Activated CD8-positive, alpha-beta T cell treated with anti-CD3 and anti-CD28 coated beads, Interleukin-2, amount 10 ng/mL, durations not matched to agents 7 days and 5 days (primary cell): ENCODE measurements at regions of chr14 and their contacts with region 1.

Region 1: DNA sequence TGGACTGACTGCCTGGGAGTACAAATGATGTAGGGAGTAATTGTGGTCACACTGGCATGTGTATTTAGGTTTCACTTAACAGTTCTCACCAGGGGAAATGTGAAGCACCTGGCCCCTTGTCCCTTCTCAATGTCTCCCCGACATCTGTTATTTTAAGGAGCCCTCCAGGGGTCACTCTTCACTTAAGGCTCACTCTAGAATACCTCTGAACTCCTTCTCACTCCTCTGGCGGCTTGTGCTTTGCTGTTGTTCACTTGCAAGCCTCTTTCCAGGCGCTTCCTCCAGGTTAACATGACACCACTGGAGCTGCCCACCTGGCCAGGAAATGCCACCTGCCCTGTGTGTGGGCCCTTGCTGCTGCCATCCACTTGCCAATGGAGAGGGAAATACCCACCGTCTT is 56.5 kb upstream of the GZMB start:
- DNase-seq: peak; percentile 59
- ATAC-seq: no peak
- H3K4me3 Mint-ChIP-seq: no peak overlapping the region
- H3K27ac Mint-ChIP-seq: peak overlapping the region; percentile 54
- H3K4me1 Mint-ChIP-seq: peaks cover 46% of the 10 kb centered on the region
- H3K27me3 Mint-ChIP-seq: no peaks in the 10 kb centered on the region

Region 2: DNA sequence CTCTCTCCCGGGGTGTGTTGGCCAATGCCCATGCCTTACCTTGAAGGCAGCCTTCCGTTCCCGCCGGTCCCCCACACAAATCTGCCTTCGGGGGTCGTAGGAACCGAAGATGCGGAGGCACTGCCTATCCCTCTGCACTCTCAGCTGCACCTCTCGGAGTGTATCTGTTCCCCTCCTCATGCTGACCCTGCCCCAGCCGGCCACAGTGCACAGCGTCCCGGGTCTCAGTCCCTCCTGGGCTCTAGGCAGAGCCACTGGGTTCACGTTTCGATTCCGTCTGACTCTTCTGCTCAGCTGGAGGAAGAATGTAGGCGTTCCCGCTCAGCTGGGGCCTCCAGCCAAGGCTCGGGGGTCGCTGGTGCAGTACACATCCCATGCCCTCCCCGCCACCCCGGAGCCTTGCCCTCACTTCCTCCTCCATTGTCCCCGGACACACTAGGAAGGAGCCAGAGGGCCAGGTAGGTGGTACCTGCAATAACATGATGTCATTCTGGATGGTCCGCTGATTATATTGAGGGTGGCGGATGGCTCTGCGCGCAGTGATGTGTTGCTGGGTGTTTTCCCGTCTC is 116.2 kb before region 1 on chr14:
- CTCF ChIA-PET with region 1: no interaction called
- POLR2A ChIA-PET with region 1: no interaction called
- DNase-seq: no peak
- ATAC-seq: no peak
- H3K4me3 Mint-ChIP-seq: no peak overlapping the region
- H3K27ac Mint-ChIP-seq: no peak overlapping the region
- H3K4me1 Mint-ChIP-seq: peaks cover 11% of the 10 kb centered on the region
- H3K27me3 Mint-ChIP-seq: peaks cover 24% of the 10 kb centered on the region

Region 3: GRCh38 chr14:24673534-24674203 is 16.8 kb before region 1 on chr14:
- CTCF ChIA-PET with region 1: interaction called, 35 read pairs
- POLR2A ChIA-PET with region 1: interaction called, 25 read pairs
- DNase-seq: peak; percentile 91
- ATAC-seq: peak; percentile 84
- H3K4me3 Mint-ChIP-seq: peak overlapping the region; percentile 75
- H3K27ac Mint-ChIP-seq: peak overlapping the region; percentile 99
- H3K4me1 Mint-ChIP-seq: peaks cover 90% of the 10 kb centered on the region
- H3K27me3 Mint-ChIP-seq: no peaks in the 10 kb centered on the region

Region 4: GRCh38 chr14:24678801-24679247 is 11.7 kb before region 1 on chr14:
- CTCF ChIA-PET with region 1: interaction called, 35 read pairs
- POLR2A ChIA-PET with region 1: interaction called, 25 read pairs
- DNase-seq: peak; percentile 92
- ATAC-seq: peak; percentile 73
- H3K4me3 Mint-ChIP-seq: peak overlapping the region; percentile 77
- H3K27ac Mint-ChIP-seq: peak overlapping the region; percentile 93
- H3K4me1 Mint-ChIP-seq: peaks cover 71% of the 10 kb centered on the region
- H3K27me3 Mint-ChIP-seq: no peaks in the 10 kb centered on the region

Region 5: GRCh38 chr14:24809135-24809534 is 118.6 kb after region 1 on chr14:
- CTCF ChIA-PET with region 1: no interaction called
- POLR2A ChIA-PET with region 1: no interaction called
- DNase-seq: no peak
- ATAC-seq: no peak
- H3K4me3 Mint-ChIP-seq: no peak overlapping the region
- H3K27ac Mint-ChIP-seq: no peak overlapping the region
- H3K4me1 Mint-ChIP-seq: no peaks in the 10 kb centered on the region
- H3K27me3 Mint-ChIP-seq: peaks cover 11% of the 10 kb centered on the region